CD4-positive, alpha-beta memory T cell (primary cell): ENCODE measurements at regions of chr7 and their contacts with region 1.

Region 1: GRCh38 chr7:100705753-100706671 is at the start of gene POP7:
- DNase-seq: peak; percentile 96 to 97 (median 97)
- H3K4me3 ChIP-seq: peak within 1 kb of the TSS; percentile 89 to 90
- H3K4me3 Mint-ChIP-seq: peak within 1 kb of the TSS; percentile 93 to 100 (median 96)
- H3K27ac ChIP-seq: peak within 1 kb of the TSS; percentile 79
- H3K27ac Mint-ChIP-seq: peak within 1 kb of the TSS; percentile 90 to 98 (median 96)
- H3K4me1 ChIP-seq: peaks cover 16% of the 10 kb centered on the region
- H3K4me1 Mint-ChIP-seq: peaks cover 5 to 18% (median 11%) of the 10 kb centered on the region in 4 donors
- H3K27me3 ChIP-seq: no peaks in the 10 kb centered on the region
- H3K27me3 Mint-ChIP-seq: peaks cover 2 to 3% of the 10 kb centered on the region in 2 donors
- total RNA-seq, gene POP7: 14.6 to 16.0 TPM

Region 2: GRCh38 chr7:100604028-100604975 is 101.7 kb before region 1 on chr7:
- CTCF ChIA-PET with region 1: interaction called, 6 read pairs
- POLR2A ChIA-PET with region 1: interaction called, 11 read pairs
- intact Hi-C with region 1: no loop called
- DNase-seq: peak; percentile 63 to 83 (median 68)
- H3K4me3 ChIP-seq: peak overlapping the region; percentile 34 to 58
- H3K4me3 Mint-ChIP-seq: peak overlapping the region; percentile 78 to 93 (median 87)
- H3K27ac ChIP-seq: peak overlapping the region; percentile 64
- H3K27ac Mint-ChIP-seq: peak overlapping the region; percentile 71 to 95 (median 91)
- H3K4me1 ChIP-seq: peaks cover 21% of the 10 kb centered on the region
- H3K4me1 Mint-ChIP-seq: peaks cover 9 to 35% (median 16%) of the 10 kb centered on the region in 4 donors
- H3K27me3 ChIP-seq: no peaks in the 10 kb centered on the region
- H3K27me3 Mint-ChIP-seq: no peaks in the 10 kb centered on the region

Region 3: GRCh38 chr7:100632951-100633717 is 72.9 kb before region 1 on chr7:
- CTCF ChIA-PET with region 1: interaction called, 35 read pairs
- POLR2A ChIA-PET with region 1: interaction called, 13 read pairs
- intact Hi-C with region 1: no loop called
- DNase-seq: peak; percentile 45 to 66 (median 55)
- H3K4me3 ChIP-seq: peak overlapping the region; percentile 22 to 68
- H3K4me3 Mint-ChIP-seq: peak overlapping the region; percentile 76 to 89 (median 85)
- H3K27ac ChIP-seq: peak overlapping the region; percentile 58
- H3K27ac Mint-ChIP-seq: peak overlapping the region in 6 of 7 donors; percentile 42 to 91 (median 76)
- H3K4me1 ChIP-seq: peaks cover 8% of the 10 kb centered on the region
- H3K4me1 Mint-ChIP-seq: peaks cover 10 to 26% (median 18%) of the 10 kb centered on the region in 4 donors
- H3K27me3 ChIP-seq: no peaks in the 10 kb centered on the region
- H3K27me3 Mint-ChIP-seq: no peaks in the 10 kb centered on the region

Region 4: DNA sequence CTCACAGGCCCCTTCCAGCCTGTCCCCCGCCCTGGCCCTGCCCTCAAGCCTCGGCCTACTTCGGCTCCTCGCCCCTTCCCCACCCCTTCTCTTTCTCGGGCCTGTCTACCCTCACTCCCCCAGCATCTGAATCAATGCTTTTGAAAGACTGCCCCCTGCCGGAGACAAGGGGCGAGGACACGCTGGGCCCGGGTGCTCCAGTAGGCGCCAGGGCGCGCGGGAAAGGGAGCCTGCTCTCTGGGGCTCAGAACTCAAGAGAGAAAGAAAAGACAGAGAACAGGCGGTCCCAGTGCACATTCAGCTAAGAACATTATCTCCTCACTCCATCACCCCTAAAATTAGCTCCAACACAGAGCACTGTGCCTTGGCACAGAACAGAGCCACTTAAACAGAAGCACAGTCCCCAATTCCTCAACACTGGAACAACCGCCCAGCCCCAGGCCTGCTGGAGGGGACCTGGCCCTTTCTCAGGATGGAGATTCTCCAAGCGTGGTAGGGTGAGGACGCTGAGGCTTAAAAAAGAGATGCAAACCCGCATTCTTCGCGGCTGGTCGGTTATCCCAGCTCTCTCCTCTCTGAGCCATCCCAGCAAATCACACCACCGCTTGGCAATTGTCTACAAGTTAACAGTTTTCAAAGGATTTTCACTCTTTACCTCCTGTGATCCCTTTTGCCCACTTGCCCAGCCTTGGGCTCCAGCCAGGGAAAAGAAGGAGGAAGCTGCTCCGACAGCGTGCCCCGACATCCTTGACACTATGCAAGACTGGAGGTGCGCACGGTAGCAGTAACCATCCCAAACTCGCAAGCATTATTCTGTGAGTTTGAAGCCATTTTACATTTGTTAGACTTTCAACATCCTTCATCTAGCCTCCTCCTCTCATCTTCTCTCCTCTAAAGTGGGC is 14.1 kb before region 1 on chr7:
- CTCF ChIA-PET with region 1: interaction called, 44 read pairs
- POLR2A ChIA-PET with region 1: interaction called, 48 read pairs
- intact Hi-C with region 1: loop called (anchors 1 kb)
- DNase-seq: peak; percentile 73 to 80 (median 78)
- H3K4me3 ChIP-seq: peak overlapping the region in 1 of 2 donors; percentile 7
- H3K4me3 Mint-ChIP-seq: peak overlapping the region; percentile 88 to 96 (median 92)
- H3K27ac ChIP-seq: no peak overlapping the region
- H3K27ac Mint-ChIP-seq: peak overlapping the region; percentile 36 to 93 (median 79)
- H3K4me1 ChIP-seq: peaks cover 40% of the 10 kb centered on the region
- H3K4me1 Mint-ChIP-seq: peaks cover 23 to 51% (median 36%) of the 10 kb centered on the region in 4 donors
- H3K27me3 ChIP-seq: no peaks in the 10 kb centered on the region
- H3K27me3 Mint-ChIP-seq: no peaks in the 10 kb centered on the region

Region 5: GRCh38 chr7:100837099-100837836 is 131.3 kb after region 1 on chr7:
- CTCF ChIA-PET with region 1: no interaction called
- POLR2A ChIA-PET with region 1: no interaction called
- intact Hi-C with region 1: loop called (anchors 1 kb)
- DNase-seq: peak; percentile 57 to 71 (median 65)
- H3K4me3 ChIP-seq: peak overlapping the region in 1 of 2 donors; percentile 51
- H3K4me3 Mint-ChIP-seq: peak overlapping the region; percentile 75 to 90 (median 85)
- H3K27ac ChIP-seq: peak overlapping the region; percentile 37
- H3K27ac Mint-ChIP-seq: peak overlapping the region; percentile 64 to 92 (median 88)
- H3K4me1 ChIP-seq: peaks cover 9% of the 10 kb centered on the region
- H3K4me1 Mint-ChIP-seq: peaks cover 2 to 21% (median 7%) of the 10 kb centered on the region in 4 donors
- H3K27me3 ChIP-seq: no peaks in the 10 kb centered on the region
- H3K27me3 Mint-ChIP-seq: peaks cover 0 to 2% of the 10 kb centered on the region in 2 donors

Region 6: GRCh38 chr7:100889761-100890634 is 184.0 kb after region 1 on chr7:
- CTCF ChIA-PET with region 1: interaction called, 4 read pairs
- POLR2A ChIA-PET with region 1: interaction called, 12 read pairs
- intact Hi-C with region 1: no loop called
- DNase-seq: peak; percentile 90 to 93 (median 91)
- H3K4me3 ChIP-seq: peak overlapping the region; percentile 61 to 70
- H3K4me3 Mint-ChIP-seq: peak overlapping the region; percentile 84 to 95 (median 88)
- H3K27ac ChIP-seq: peak overlapping the region; percentile 39
- H3K27ac Mint-ChIP-seq: peak overlapping the region in 6 of 7 donors; percentile 22 to 93 (median 78)
- H3K4me1 ChIP-seq: peaks cover 50% of the 10 kb centered on the region
- H3K4me1 Mint-ChIP-seq: peaks cover 28 to 64% (median 40%) of the 10 kb centered on the region in 4 donors
- H3K27me3 ChIP-seq: peaks cover 2% of the 10 kb centered on the region
- H3K27me3 Mint-ChIP-seq: peaks cover 12 to 18% of the 10 kb centered on the region in 2 donors